Right cardiac atrium (tissue), 5 donors: ENCODE measurements at regions of chr1 and their contacts with region 1.

Region 1: GRCh38 chr1:46718727-46719622 is at the start of gene EFCAB14:
- DNase-seq: peak; percentile 94 to 99 (median 98)
- ATAC-seq: peak; percentile 99
- H3K4me3 ChIP-seq: peak within 1 kb of the TSS; percentile 98
- H3K27ac ChIP-seq: peak within 1 kb of the TSS; percentile 98
- H3K4me1 ChIP-seq: peaks cover 8% of the 10 kb centered on the region
- H3K27me3 ChIP-seq: no peaks in the 10 kb centered on the region
- total RNA-seq, gene EFCAB14: 67.9 to 78.3 (median 75.5) TPM

Region 2: GRCh38 chr1:46549697-46550681 is 169.0 kb before region 1 on chr1:
- intact Hi-C with region 1: loop called in 1 of 4 experiments (anchors 10 kb)
- DNase-seq: peak in 1 of 3 donors; percentile 53
- ATAC-seq: no peak
- H3K4me3 ChIP-seq: no peak overlapping the region
- H3K27ac ChIP-seq: no peak overlapping the region
- H3K4me1 ChIP-seq: no peaks in the 10 kb centered on the region
- H3K27me3 ChIP-seq: no peaks in the 10 kb centered on the region